GM10248 (cell line): ENCODE measurements at regions of chr9 and their contacts with region 1.

Region 1: GRCh38 chr9:133955821-133956411 is 36.2 kb downstream of the VAV2 start:
- DNase-seq: peak; percentile 76
- CTCF ChIP-seq: no peak

Region 2: GRCh38 chr9:133945314-133945975 is 10.5 kb before region 1 on chr9:
- CTCF ChIA-PET with region 1: interaction called, 18 read pairs
- POLR2A ChIA-PET with region 1: interaction called, 9 read pairs
- DNase-seq: peak; percentile 89
- CTCF ChIP-seq: no peak

Region 3: DNA sequence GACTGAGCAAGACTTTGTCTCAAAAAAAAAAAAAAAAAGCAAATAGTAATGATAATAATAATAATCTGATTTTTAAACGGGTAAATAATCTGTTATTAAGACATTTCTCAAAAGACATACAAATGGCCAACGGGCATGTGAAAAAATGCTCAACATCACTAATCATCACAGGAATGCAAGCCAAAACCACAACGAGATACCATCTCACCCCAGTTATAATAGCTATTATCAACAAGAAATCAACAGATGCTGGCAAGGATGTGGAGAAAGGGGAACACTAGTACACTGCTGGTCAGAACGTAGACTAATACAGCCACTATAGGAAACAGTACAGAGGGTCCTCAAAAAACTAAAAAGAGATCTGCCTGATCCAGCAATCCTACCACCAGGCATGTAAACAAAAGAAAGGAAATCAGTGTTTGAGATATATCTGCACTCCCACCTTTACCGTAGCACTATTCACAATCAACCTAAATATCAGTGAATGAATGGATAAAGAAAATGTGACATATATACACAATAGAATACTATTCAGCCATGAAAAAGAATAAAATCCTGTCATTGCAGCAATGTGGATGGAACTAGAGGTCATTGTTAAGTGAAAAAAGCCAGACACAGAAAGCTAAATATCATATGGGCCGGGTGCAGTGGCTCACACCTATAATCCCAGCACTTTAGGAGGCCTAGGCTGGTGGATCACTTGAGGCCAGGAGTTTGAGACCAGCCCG is 11.3 kb after region 1 on chr9:
- CTCF ChIA-PET with region 1: interaction called, 30 read pairs
- POLR2A ChIA-PET with region 1: interaction called, 5 read pairs
- DNase-seq: no peak
- CTCF ChIP-seq: no peak

Region 4: GRCh38 chr9:133972041-133972941 is 16.4 kb after region 1 on chr9:
- CTCF ChIA-PET with region 1: interaction called, 30 read pairs
- POLR2A ChIA-PET with region 1: interaction called, 5 read pairs
- DNase-seq: no peak
- CTCF ChIP-seq: no peak

Region 5: DNA sequence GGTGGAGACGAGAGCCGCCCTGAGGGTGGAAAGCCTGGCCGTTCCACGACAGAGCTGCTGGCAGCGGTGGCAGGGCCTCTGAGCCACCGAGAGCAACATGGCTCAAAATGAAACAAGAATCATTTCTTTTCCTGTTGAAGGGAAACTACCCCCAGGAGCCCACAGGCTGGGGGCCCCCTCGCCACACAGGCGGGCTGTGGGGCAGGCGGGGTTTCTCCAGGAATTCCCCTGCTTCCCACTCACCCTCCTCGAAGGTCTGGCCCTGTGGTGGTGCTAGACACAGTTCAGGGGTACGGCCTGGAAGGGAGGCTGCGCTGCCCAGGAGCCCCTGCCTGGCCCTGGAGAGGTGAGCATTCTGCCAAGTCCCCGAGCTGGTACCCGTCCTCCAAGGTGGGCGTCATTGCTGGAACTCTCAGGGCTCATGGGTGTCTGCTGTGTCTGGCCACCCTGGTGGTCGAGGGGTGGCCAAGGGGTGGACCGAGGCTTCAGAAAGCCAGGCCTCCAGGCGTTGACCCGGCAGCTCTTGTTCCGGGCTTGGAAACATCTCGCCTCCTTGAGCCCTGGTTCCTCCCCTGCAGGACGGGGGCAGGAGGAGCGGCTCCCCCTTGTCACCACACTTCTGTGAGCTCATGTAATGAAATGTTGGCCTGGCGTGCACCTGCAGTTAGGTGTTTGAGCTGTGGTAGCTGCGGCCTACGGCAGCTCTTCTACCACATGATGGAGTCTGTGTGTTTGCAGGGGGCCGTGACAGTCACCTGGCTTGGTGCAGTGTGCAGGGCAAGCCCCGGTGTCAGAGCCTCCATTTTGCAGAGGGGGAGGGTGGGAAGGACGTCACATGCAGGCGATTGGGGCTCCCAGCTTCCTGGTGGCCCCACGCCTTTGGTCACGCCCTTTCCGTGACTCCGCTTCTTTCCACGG is 435.7 kb after region 1 on chr9:
- CTCF ChIA-PET with region 1: no interaction called
- POLR2A ChIA-PET with region 1: no interaction called
- DNase-seq: peak; percentile 86
- CTCF ChIP-seq: peak; percentile 7